Aorta (tissue), 5 donors: ENCODE measurements at regions of chr10 and their contacts with region 1.

Region 1: GRCh38 chr10:14822879-14823755 is 14.7 kb downstream of the CDNF start:
- DNase-seq: no peak
- ATAC-seq: no peak
- H3K4me3 ChIP-seq: no peak overlapping the region
- H3K27ac ChIP-seq: no peak overlapping the region
- H3K4me1 ChIP-seq: no peaks in the 10 kb centered on the region
- H3K27me3 ChIP-seq: no peaks in the 10 kb centered on the region

Region 2: DNA sequence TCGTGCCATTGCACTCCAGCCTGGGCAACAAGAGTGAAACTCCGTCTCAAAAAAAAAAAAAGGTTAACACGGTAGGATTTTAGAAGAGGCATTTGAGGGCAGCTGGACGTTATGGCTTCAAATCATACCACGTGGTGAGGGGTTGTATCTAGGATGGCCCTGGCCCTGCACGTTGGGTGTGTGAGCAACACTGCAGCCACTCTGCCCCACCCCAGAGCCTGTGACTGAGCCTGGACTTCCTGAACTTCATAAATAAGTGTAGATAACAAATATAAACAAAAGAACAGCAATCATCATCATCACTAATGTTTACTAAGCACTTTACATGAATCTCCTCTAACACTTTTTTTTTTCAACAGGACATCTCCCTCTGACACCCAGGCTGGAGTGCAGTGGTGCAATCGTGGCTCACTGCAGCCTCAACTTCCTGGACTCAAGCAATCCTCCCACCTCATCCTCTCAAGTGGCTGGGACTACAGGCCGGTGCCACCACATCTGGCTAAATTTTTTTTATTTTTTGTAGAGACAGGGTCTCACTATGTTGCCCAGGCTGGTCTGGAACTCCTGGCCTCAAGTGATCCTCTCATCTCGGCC is 322.8 kb before region 1 on chr10:
- intact Hi-C with region 1: loop called (anchors 2 to 5 kb)
- DNase-seq: no peak
- ATAC-seq: no peak
- H3K4me3 ChIP-seq: no peak overlapping the region
- H3K27ac ChIP-seq: no peak overlapping the region
- H3K4me1 ChIP-seq: no peaks in the 10 kb centered on the region
- H3K27me3 ChIP-seq: no peaks in the 10 kb centered on the region

Region 3: GRCh38 chr10:14536241-14537213 is 286.6 kb before region 1 on chr10:
- intact Hi-C with region 1: loop called in 1 of 2 experiments (anchors 2 kb)
- DNase-seq: peak; percentile 80 to 82
- ATAC-seq: peak; percentile 64
- H3K4me3 ChIP-seq: no peak overlapping the region
- H3K27ac ChIP-seq: peak overlapping the region in 1 of 2 donors; percentile 76
- H3K4me1 ChIP-seq: no peaks in the 10 kb centered on the region
- H3K27me3 ChIP-seq: no peaks in the 10 kb centered on the region

Region 4: GRCh38 chr10:14736600-14737081 is 86.5 kb before region 1 on chr10:
- intact Hi-C with region 1: loop called in 1 of 2 experiments (anchors 10 kb)
- DNase-seq: no peak
- ATAC-seq: peak; percentile 62
- H3K4me3 ChIP-seq: no peak overlapping the region
- H3K27ac ChIP-seq: peak overlapping the region; percentile 73 to 77
- H3K4me1 ChIP-seq: peaks cover 0 to 3% of the 10 kb centered on the region in 2 donors
- H3K27me3 ChIP-seq: no peaks in the 10 kb centered on the region

Region 5: DNA sequence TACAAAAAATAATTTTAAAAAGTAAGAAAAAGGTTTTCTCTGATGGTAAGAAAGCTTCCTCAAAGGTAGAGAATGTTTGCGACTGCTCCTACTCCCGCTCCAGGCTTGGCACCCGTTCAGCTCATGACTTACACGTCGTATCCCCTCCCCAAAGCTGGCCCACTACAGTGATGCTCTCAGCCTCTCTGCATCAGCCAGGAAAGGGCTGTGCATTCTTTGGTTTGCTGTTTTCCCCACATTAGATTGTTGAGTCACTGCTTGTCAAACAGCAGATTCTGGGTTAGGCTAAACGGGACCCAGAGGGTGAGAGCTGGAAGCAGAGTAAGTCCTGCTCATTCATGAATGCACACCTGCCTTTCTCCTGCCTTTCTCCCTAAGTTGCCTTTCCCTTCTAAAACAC is 400.1 kb after region 1 on chr10:
- intact Hi-C with region 1: no loop called
- DNase-seq: no peak
- ATAC-seq: no peak
- H3K4me3 ChIP-seq: no peak overlapping the region
- H3K27ac ChIP-seq: no peak overlapping the region
- H3K4me1 ChIP-seq: no peaks in the 10 kb centered on the region
- H3K27me3 ChIP-seq: no peaks in the 10 kb centered on the region